K562 (cell line): ENCODE measurements at regions of chr2 and their contacts with region 1.

Region 1: DNA sequence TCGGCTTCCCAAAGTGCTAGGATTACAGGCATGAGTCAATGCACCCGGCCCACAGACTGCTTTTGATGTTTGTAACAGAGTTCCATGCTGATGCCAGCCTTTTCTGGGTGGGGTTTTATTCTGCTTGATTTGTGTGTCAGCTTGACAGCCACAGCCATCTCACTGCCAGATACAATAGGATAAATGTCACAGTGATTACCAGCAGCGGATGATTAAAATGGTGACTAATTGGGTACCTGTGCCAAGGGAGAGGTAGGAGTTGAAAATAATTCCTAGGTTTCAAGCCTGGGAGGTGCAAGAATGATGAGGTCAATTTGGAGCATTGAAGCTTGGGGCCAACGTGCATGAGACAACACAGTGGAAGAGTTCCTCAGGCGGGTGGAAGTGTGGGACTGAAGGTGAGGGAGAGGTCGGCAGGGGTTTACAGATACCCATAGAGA is 39.4 kb downstream of the SH2D6 start:
- DNase-seq: no peak
- ATAC-seq: no peak
- H3K4me3 ChIP-seq: no peak overlapping the region
- H3K27ac ChIP-seq: no peak overlapping the region
- H3K4me1 ChIP-seq: peaks cover 2 to 10% of the 10 kb centered on the region in 2 experiments; a peak in 2 of 5 replicates
- H3K27me3 ChIP-seq: no peaks in the 10 kb centered on the region
- CTCF ChIP-seq: no peak
- EP300 ChIP-seq: no peak
- POLR2A ChIP-seq: no peak
- RAD21 ChIP-seq: no peak

Region 2: DNA sequence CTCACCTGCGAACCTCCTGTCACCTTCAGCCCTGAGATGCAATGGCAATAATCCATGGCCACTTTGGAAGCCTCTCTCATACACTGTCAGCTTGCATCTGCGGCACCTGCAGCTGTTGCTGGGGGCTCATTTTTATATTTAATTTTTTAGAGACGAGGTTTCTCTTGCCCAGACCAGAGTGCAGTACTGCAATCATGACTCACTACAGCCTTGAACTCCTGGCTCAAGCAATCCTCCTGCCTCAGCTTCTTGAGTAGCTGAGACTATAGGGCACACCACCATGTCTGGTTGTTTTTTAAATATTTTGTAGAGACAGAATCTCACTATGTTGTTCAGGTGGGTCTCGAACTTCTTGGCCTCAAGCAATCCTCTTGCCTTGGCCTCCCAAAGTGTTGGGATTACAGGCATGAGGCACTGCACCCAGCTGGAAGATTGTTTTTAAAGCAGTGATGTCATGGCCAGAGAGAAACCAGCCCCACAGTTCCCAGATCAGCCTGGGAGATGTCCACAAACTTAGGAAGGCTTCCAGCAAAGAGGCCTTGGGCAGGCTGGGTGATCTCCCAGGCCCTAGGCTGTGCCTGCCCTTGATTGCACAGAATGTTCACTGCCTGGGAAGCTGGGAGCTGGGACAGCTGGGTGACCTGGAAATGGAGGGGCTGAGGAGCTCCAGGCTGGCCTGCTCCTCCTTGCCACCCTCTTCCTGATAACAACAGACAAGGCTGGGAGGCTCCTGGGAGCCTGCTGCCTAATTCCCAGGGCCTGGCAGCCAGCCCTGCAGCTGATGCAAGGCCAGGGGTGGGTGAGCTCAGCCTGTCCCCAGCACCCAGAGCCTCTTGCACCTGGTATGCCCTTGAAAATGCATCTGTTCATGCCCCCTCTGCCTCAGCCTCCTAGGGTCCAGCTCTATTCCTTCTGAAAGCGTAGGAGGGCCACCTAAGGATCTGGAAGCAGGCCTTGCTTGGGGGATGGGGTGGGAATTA is 12.3 kb before region 1 on chr2:
- CTCF ChIA-PET with region 1: no interaction called
- POLR2A ChIA-PET with region 1: interaction called, 13 read pairs
- in situ Hi-C with region 1: no loop called
- intact Hi-C with region 1: no loop called
- DNase-seq: no peak
- ATAC-seq: peak; percentile 43
- H3K4me3 ChIP-seq: no peak overlapping the region
- H3K27ac ChIP-seq: no peak overlapping the region
- H3K4me1 ChIP-seq: peaks cover 13 to 14% of the 10 kb centered on the region in 2 experiments; a peak in 4 of 5 replicates
- H3K27me3 ChIP-seq: no peaks in the 10 kb centered on the region
- CTCF ChIP-seq: no peak
- EP300 ChIP-seq: no peak
- POLR2A ChIP-seq: no peak
- RAD21 ChIP-seq: no peak

Region 3: DNA sequence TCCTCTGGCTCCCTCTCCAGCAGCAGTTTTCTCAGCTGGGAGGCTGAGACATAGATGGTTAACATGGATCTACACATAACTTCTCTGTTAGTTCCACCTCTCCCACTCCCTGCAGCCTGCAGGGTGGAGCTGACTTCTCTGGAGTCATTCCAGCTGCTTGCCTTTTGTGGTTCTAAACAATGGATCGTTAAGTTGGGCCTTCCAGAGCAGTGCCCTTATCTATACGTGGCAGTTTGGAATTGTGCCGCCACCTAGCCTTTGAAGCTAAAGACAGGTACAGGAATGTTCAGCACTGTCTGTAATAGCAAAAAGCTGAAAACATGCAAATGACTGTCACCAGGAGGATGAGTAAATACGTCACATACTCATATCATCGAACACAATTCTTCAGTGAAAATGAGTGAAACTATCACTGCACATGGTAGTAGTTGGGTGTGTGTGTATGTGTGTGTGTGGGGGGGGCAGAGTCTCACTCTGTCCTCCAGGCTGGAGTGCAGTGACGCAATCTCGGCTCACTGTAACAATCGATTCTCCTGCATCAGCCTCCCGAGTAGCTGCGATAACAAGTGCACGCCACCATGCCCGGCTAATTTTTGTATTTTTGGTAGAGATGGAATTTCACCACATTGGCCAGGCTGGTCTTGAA is 10.9 kb after region 1 on chr2:
- CTCF ChIA-PET with region 1: no interaction called
- POLR2A ChIA-PET with region 1: interaction called, 12 read pairs
- in situ Hi-C with region 1: no loop called
- intact Hi-C with region 1: no loop called
- DNase-seq: peak; percentile 48 to 78 (median 70)
- ATAC-seq: peak; percentile 80
- H3K4me3 ChIP-seq: no peak overlapping the region
- H3K27ac ChIP-seq: peak overlapping the region; percentile 31; the same call in 2 of the 3 replicates
- H3K4me1 ChIP-seq: peaks cover 5 to 12% of the 10 kb centered on the region in 2 experiments; a peak in 4 of 5 replicates
- H3K27me3 ChIP-seq: no peaks in the 10 kb centered on the region
- CTCF ChIP-seq: no peak
- EP300 ChIP-seq: no peak; the same call in 1 of the 2 replicates
- POLR2A ChIP-seq: no peak
- RAD21 ChIP-seq: peak in 1 of 2 experiments; percentile 42; a peak in 2 of 4 replicates